ENCODE measurements at regions of chr1 and their contacts with region 1.

Region 1: GRCh38 chr1:70112838-70113237 is 92.5 kb downstream of the LRRC40 start:
- ATAC-seq: no peak
- H3K4me3 ChIP-seq: no peak overlapping the region
- H3K27ac ChIP-seq: no peak overlapping the region
- H3K4me1 ChIP-seq: peaks cover 0 to 7% of the 10 kb centered on the region in 2 donors

Region 2: GRCh38 chr1:68470388-68470970 is 1642.4 kb before region 1 on chr1:
- in situ Hi-C with region 1: loop called in 1 of 9 experiments (anchors 25 kb)
- ATAC-seq: peak in 3 of 8 experiments; percentile 18 to 45 (median 25)
- H3K4me3 ChIP-seq: no peak overlapping the region
- H3K27ac ChIP-seq: no peak overlapping the region
- H3K4me1 ChIP-seq: no peaks in the 10 kb centered on the region